ENCODE measurements at regions of chr1 and their contacts with region 1.

Region 1: GRCh38 chr1:36385410-36386257 is at the start of gene STK40:
- DNase-seq: peak; percentile 99
- ATAC-seq: peak; percentile 72 to 74
- H3K4me3 ChIP-seq: peak within 1 kb of the TSS; percentile 90 to 99 (median 94)
- H3K27ac ChIP-seq: peak within 1 kb of the TSS; percentile 95 to 100 (median 97)
- H3K4me1 ChIP-seq: peaks cover 79 to 81% of the 10 kb centered on the region in 2 donors
- H3K27me3 ChIP-seq: no peaks in the 10 kb centered on the region
- CTCF ChIP-seq: no peak
- POLR2A ChIP-seq: peak; percentile 96 to 97
- total RNA-seq, gene STK40: 109 to 263 (median 211) TPM

Region 2: DNA sequence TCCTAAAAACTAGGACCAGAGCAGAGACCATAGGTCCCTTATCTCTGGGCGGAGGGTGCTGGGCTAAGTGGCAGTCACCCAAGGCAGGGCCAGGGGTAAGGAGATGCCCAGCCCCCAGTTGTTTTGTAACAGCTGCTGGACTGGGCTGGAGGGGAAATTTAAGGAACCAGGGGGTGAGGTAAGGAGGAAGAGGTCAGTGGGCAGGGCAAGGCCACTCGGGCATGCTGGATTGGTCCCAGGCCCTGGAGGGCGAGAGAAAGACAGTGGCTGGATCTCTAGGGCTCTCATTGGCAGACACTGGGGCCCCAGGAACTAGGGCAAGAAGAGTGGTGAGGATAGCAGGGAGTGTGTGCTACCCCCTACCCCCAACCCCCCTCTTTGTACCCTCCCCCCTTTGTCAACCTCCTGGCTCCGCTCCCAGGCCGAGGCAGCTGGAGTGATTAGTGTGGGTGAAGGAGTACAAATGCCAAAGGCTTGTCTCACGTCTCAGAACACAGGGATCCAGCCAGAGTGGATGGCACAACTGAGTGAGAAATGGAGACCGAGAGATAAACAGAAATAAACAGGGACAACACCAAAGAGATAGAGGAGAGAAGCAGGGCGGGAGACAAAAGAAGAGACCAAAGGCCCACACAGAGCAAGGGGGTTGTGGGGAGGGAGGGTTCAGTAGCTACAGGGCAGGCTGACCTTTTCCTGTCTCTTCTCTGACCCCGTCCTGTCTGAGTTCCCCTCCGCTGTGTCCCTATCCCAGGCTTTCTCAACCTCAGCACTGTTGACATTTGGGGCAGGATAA is 181.9 kb before region 1 on chr1:
- in situ Hi-C with region 1: no loop called
- intact Hi-C with region 1: loop called (anchors 2 kb)
- DNase-seq: peak; percentile 88 to 97
- ATAC-seq: peak; percentile 69 to 77
- H3K4me3 ChIP-seq: peak overlapping the region in 3 of 4 donors; percentile 8 to 24 (median 16)
- H3K27ac ChIP-seq: peak overlapping the region; percentile 89 to 97 (median 94)
- H3K4me1 ChIP-seq: peaks cover 71 to 79% of the 10 kb centered on the region in 2 donors
- H3K27me3 ChIP-seq: no peaks in the 10 kb centered on the region
- CTCF ChIP-seq: no peak
- POLR2A ChIP-seq: peak in 1 of 2 donors; percentile 48

Region 3: DNA sequence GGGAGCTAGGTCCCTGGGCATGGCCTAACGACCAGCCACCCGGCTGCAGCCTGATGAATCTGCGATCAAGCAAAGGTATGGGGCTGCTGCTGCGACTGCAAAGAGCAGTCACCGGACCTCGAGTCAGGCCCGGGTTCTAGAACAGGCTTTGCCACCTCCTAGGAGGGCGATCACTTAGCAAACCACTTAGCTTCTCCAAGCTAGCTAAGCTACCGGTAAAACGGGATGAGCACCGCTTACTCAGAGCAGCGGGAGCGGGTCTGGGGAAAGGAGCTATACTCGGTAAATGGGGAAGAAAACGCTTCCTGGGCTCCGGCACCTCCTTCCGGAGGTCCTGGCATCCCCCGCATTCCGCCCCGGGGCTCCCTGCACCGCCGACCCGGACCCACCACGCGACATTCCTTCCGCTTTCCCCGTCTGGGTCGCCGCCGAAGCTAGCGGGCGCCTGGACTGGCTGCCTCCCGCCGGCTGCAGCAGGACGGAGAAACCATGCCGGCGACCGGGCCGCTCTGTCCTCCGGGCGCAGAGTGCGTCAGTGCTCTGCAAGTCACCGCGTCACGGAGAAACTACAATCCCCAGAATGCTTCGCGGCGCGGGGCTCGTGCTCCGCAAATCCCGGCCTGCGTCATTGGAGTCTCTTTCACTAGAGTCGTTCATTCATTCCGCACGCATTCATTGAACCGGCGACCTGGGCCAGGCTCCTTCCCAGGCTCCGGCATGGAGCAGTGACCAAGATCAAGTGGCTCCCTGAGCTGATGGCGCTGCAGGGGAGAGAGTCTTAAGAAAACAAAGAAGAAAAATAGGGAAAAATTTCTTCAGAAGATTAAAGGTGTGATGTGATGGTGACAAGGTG is 12.0 kb after region 1 on chr1 and contains the start of gene LSM10:
- in situ Hi-C with region 1: no loop called
- intact Hi-C with region 1: loop called (anchors 1 kb)
- DNase-seq: peak; percentile 91
- ATAC-seq: peak; percentile 95
- H3K4me3 ChIP-seq: peak within 1 kb of the TSS; percentile 83 to 97 (median 86)
- H3K27ac ChIP-seq: peak within 1 kb of the TSS; percentile 95 to 99 (median 95)
- H3K4me1 ChIP-seq: peaks cover 14 to 26% of the 10 kb centered on the region in 2 donors
- H3K27me3 ChIP-seq: no peaks in the 10 kb centered on the region
- CTCF ChIP-seq: no peak
- POLR2A ChIP-seq: peak; percentile 97 to 98
- total RNA-seq, gene LSM10: 56.9 to 129 (median 103) TPM

Region 4: GRCh38 chr1:36446271-36446670 is 60.6 kb after region 1 on chr1:
- in situ Hi-C with region 1: no loop called
- intact Hi-C with region 1: no loop called
- DNase-seq: no peak
- ATAC-seq: no peak
- H3K4me3 ChIP-seq: no peak overlapping the region
- H3K27ac ChIP-seq: no peak overlapping the region
- H3K4me1 ChIP-seq: peaks cover 5 to 7% of the 10 kb centered on the region in 2 donors
- H3K27me3 ChIP-seq: no peaks in the 10 kb centered on the region
- CTCF ChIP-seq: no peak
- POLR2A ChIP-seq: no peak

Region 5: GRCh38 chr1:37474046-37474759 is 1088.6 kb after region 1 on chr1 and contains the start of gene ZC3H12A:
- in situ Hi-C with region 1: no loop called
- intact Hi-C with region 1: loop called (anchors 5 kb)
- DNase-seq: peak; percentile 79 to 92
- ATAC-seq: peak; percentile 59
- H3K4me3 ChIP-seq: peak within 1 kb of the TSS; percentile 79 to 94 (median 93)
- H3K27ac ChIP-seq: peak within 1 kb of the TSS; percentile 89 to 98 (median 97)
- H3K4me1 ChIP-seq: peaks cover 65 to 72% of the 10 kb centered on the region in 2 donors
- H3K27me3 ChIP-seq: no peaks in the 10 kb centered on the region
- CTCF ChIP-seq: no peak
- POLR2A ChIP-seq: peak; percentile 99
- total RNA-seq, gene ZC3H12A: 5.3 to 27.1 (median 8.6) TPM